ENCODE measurements at regions of chr16 and their contacts with region 1.

Region 1: GRCh38 chr16:71808593-71809459 is at the start of gene AP1G1:
- DNase-seq: peak; percentile 88 to 98 (median 93)
- H3K4me3 ChIP-seq: peak within 1 kb of the TSS; percentile 90
- H3K4me3 Mint-ChIP-seq: peak within 1 kb of the TSS; percentile 90 to 100 (median 95)
- H3K27ac ChIP-seq: peak within 1 kb of the TSS; percentile 97
- H3K27ac Mint-ChIP-seq: peak within 1 kb of the TSS; percentile 97 to 100 (median 100)
- H3K4me1 ChIP-seq: peaks cover 30% of the 10 kb centered on the region
- H3K4me1 Mint-ChIP-seq: peaks cover 24 to 57% (median 38%) of the 10 kb centered on the region in 3 donors
- H3K27me3 ChIP-seq: no peaks in the 10 kb centered on the region
- H3K27me3 Mint-ChIP-seq: peaks cover 0 to 5% of the 10 kb centered on the region in 2 donors
- total RNA-seq, gene AP1G1: 80.4 to 83.3 TPM

Region 2: GRCh38 chr16:71845639-71846430 is 37.0 kb after region 1 on chr16 and contains the start of gene ATXN1L:
- CTCF ChIA-PET with region 1: interaction called, 4 read pairs
- POLR2A ChIA-PET with region 1: interaction called, 11 read pairs
- DNase-seq: peak; percentile 88 to 95 (median 92)
- H3K4me3 ChIP-seq: peak within 1 kb of the TSS; percentile 97
- H3K4me3 Mint-ChIP-seq: peak within 1 kb of the TSS; percentile 91 to 97 (median 94)
- H3K27ac ChIP-seq: peak within 1 kb of the TSS; percentile 90
- H3K27ac Mint-ChIP-seq: peak within 1 kb of the TSS; percentile 91 to 98 (median 96)
- H3K4me1 ChIP-seq: peaks cover 17% of the 10 kb centered on the region
- H3K4me1 Mint-ChIP-seq: peaks cover 34 to 50% (median 43%) of the 10 kb centered on the region in 3 donors
- H3K27me3 ChIP-seq: no peaks in the 10 kb centered on the region
- H3K27me3 Mint-ChIP-seq: no peaks in the 10 kb centered on the region
- total RNA-seq, gene ATXN1L: 16.9 to 19.7 TPM

Region 3: DNA sequence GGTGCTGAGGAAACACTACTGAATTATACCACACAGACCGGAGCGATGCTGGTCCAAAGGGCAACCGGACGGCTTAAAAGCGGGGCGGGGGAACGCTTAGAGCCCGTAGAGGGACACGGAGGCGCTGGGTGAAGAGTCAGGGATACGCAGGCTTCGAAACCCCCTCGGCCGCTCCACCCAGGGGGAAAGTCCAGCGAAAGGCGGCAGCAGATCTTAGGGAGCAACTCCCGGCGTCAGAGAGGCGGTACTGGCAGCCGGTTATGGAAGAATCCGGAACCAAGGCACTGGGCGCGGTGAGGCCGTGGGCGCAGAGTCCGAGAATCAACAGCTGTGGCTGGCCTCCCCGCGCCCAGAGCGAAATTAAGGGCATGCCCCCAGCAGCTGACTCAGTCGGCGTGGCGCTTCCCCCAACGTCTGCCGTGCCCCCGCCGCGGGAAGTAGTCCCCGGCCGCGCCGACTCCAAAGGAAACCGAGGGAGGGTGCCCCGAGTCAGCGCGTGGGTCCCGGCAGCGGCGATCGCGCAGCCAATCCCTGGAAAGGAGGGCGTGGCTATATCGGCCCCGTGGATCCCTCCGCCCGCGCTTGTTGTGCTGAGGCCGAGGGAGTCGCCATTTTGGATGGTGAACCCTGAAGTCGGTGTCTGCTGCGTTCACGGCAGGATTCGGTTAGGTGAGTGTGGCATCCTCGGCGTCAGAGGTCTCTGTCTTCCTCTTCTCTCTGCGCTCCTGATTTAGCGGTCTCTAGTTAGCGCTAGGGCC is 86.3 kb after region 1 on chr16 and contains the start of gene IST1:
- CTCF ChIA-PET with region 1: interaction called, 7 read pairs
- POLR2A ChIA-PET with region 1: interaction called, 26 read pairs
- DNase-seq: peak; percentile 96 to 99 (median 98)
- H3K4me3 ChIP-seq: peak within 1 kb of the TSS; percentile 96
- H3K4me3 Mint-ChIP-seq: peak within 1 kb of the TSS; percentile 91 to 99 (median 98)
- H3K27ac ChIP-seq: peak within 1 kb of the TSS; percentile 89
- H3K27ac Mint-ChIP-seq: peak within 1 kb of the TSS; percentile 95 to 99 (median 97)
- H3K4me1 ChIP-seq: peaks cover 39% of the 10 kb centered on the region
- H3K4me1 Mint-ChIP-seq: peaks cover 29 to 37% (median 32%) of the 10 kb centered on the region in 3 donors
- H3K27me3 ChIP-seq: no peaks in the 10 kb centered on the region
- H3K27me3 Mint-ChIP-seq: peaks cover 0 to 3% of the 10 kb centered on the region in 2 donors
- total RNA-seq, gene IST1: 172 to 177 TPM